ENCODE measurements at regions of chr22 and their contacts with region 1.

Region 1: DNA sequence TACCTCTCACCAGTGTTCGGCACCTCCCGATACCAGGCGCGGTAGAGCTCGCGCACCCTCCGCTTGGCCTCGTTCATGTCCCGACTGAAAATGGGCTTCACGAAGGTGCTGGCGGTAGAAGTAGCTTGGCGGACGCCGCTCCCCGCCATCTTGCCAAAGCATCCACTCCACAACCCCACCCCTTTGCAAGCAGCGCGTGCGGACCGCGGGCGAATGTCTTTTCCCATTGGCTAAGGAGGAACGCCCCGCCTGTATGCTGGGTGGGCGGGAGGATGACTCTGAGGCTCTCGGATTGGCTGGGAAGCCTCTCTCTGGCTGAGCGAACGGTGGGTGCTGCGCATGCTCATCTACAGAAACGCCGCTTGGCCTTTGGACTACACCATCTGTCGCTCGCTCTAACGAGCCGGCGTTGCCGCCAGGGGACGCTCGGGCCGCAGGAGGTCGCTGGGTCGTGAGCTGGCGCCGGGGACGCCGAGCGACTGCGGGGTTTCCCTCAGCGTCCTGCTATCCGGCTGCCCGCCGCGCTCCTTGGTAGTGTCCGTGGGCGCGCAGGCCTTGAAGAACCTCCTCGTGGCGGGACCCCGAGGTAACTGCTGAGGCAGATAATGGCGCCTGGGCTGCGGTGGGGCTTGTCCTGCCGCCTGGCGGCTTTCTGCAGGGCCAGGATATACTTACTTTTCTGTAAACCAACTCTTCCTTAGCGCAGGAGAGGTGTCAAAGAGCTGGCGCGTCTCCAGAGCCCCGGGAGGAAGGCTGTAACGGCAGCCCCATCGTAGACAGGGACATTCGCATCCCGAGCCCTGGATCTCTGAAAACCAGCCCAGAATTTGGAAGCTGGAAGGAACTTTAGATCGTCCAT is at the start of gene NDUFA6:
- DNase-seq: peak; percentile 99
- H3K4me3 Mint-ChIP-seq: peak within 1 kb of the TSS; percentile 98
- H3K27ac Mint-ChIP-seq: peak within 1 kb of the TSS; percentile 99
- H3K4me1 Mint-ChIP-seq: peaks cover 31% of the 10 kb centered on the region
- H3K27me3 Mint-ChIP-seq: no peaks in the 10 kb centered on the region
- total RNA-seq, gene NDUFA6: 122 to 126 TPM

Region 2: DNA sequence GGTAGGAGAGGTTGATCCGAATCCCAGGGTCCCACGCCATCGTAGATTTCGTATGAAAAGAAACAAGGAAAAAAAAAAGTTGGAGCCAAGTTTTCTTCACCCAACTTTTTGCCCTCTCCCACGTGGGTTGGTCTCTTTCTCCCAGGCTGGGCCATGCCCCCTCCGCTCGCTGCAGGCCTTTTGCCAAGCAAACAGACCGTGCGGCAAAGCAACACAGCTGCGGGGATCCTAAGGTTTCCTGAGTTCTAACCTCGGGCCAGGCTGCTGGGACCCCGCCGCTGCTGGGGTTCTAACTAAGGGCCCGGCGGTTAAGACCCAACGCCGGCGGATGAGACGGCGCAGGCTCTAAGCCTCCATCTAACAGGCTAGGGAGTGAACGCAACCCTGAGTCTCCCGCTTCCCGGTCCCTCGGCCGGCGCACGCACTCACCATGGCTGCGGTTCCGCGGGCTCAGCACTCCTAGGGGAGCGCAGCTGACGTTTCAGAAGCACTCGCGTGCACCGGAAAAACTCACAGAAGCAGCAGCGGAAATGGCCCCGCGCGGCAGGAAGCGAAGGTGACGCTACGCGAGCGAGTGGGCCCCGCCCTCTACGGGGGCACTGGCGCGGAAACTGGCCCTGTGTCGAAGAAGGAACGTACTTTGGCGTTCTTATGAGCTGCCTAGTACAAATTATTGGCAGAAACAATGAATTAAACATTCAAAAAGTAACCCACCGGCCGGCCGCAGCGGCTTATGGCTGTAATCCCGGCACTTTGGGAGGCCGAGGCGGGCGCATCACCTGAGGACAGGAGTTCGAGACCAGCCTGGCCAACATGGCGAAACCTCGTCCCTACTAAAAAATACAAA is 402.2 kb before region 1 on chr22 and contains the start of gene SNU13:
- CTCF ChIA-PET with region 1: no interaction called
- intact Hi-C with region 1: loop called (anchors 2 kb)
- DNase-seq: peak; percentile 96
- H3K4me3 Mint-ChIP-seq: peak within 1 kb of the TSS; percentile 97
- H3K27ac Mint-ChIP-seq: peak within 1 kb of the TSS; percentile 97
- H3K4me1 Mint-ChIP-seq: peaks cover 39% of the 10 kb centered on the region
- H3K27me3 Mint-ChIP-seq: no peaks in the 10 kb centered on the region
- total RNA-seq, gene SNU13: 265 to 277 TPM

Region 3: GRCh38 chr22:42007922-42008321 is 82.9 kb before region 1 on chr22:
- CTCF ChIA-PET with region 1: no interaction called
- intact Hi-C with region 1: no loop called
- DNase-seq: no peak
- H3K4me3 Mint-ChIP-seq: no peak overlapping the region
- H3K27ac Mint-ChIP-seq: no peak overlapping the region
- H3K4me1 Mint-ChIP-seq: no peaks in the 10 kb centered on the region
- H3K27me3 Mint-ChIP-seq: peaks cover 6% of the 10 kb centered on the region

Region 4: GRCh38 chr22:42070517-42071422 is 20.1 kb before region 1 on chr22 and contains the start of gene NAGA:
- CTCF ChIA-PET with region 1: interaction called, 4 read pairs
- intact Hi-C with region 1: loop called (anchors 1 kb)
- DNase-seq: peak; percentile 96
- H3K4me3 Mint-ChIP-seq: peak within 1 kb of the TSS; percentile 87
- H3K27ac Mint-ChIP-seq: peak within 1 kb of the TSS; percentile 88
- H3K4me1 Mint-ChIP-seq: peaks cover 34% of the 10 kb centered on the region
- H3K27me3 Mint-ChIP-seq: no peaks in the 10 kb centered on the region
- total RNA-seq, gene NAGA: 14.6 to 15.9 TPM

Region 5: GRCh38 chr22:42180349-42180842 is 89.6 kb after region 1 on chr22:
- CTCF ChIA-PET with region 1: no interaction called
- intact Hi-C with region 1: loop called (anchors 2 kb)
- DNase-seq: peak; percentile 74
- H3K4me3 Mint-ChIP-seq: peak overlapping the region; percentile 14
- H3K27ac Mint-ChIP-seq: peak overlapping the region; percentile 73
- H3K4me1 Mint-ChIP-seq: peaks cover 92% of the 10 kb centered on the region
- H3K27me3 Mint-ChIP-seq: no peaks in the 10 kb centered on the region

Region 6: DNA sequence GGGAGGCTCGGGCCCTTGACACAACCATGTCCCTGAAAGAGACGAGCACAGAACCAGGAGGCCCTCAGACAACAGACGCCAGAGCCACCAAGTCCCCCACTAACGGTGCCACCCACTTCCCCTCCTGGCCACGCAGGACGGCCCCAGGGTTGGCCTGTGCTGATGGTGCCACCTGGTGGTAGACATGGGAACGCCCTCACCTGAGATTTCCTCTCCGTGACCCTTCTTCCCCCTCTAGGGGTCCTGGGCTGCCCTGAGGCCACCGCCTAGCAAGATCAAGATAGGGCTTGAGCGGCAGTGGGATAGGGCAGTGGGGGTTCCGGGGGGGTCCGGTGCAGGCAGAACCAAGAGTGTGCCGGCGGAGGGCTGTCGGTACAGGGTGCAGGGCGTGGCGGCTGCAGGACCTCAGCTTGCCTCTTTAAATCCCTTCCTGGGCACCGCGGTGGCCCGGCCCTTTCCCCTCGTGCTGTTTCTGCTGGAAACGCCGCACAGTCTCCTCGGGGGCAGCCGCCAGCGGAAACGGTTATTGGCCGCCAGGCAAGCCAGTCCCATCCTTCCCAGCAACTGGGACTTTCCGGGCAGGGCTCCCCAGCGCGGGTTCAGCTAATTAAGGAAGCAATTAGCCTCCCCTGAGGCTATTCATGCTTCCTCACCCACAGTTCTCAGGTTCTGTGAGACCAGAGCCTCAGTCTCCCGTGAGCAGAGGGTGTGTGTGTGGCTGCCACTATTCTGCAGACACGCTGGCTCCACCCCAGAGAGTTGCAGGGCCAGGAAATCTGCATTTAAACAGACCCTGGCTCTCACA is 346.9 kb after region 1 on chr22:
- CTCF ChIA-PET with region 1: interaction called, 32 read pairs
- intact Hi-C with region 1: loop called (anchors 1 kb)
- DNase-seq: peak; percentile 85
- H3K4me3 Mint-ChIP-seq: peak overlapping the region; percentile 68
- H3K27ac Mint-ChIP-seq: no peak overlapping the region
- H3K4me1 Mint-ChIP-seq: peaks cover 18% of the 10 kb centered on the region
- H3K27me3 Mint-ChIP-seq: no peaks in the 10 kb centered on the region

Region 7: GRCh38 chr22:42553475-42554361 is 462.9 kb after region 1 on chr22 and contains the start of gene SERHL2:
- CTCF ChIA-PET with region 1: no interaction called
- intact Hi-C with region 1: loop called (anchors 2 kb)
- DNase-seq: peak; percentile 85
- H3K4me3 Mint-ChIP-seq: peak within 1 kb of the TSS; percentile 71
- H3K27ac Mint-ChIP-seq: no peak within 1 kb of the TSS
- H3K4me1 Mint-ChIP-seq: peaks cover 6% of the 10 kb centered on the region
- H3K27me3 Mint-ChIP-seq: no peaks in the 10 kb centered on the region
- total RNA-seq, gene SERHL2: 0.36 to 1.3 TPM